CD14-positive monocyte (primary cell): ENCODE measurements at regions of chr17 and their contacts with region 1.

Region 1: DNA sequence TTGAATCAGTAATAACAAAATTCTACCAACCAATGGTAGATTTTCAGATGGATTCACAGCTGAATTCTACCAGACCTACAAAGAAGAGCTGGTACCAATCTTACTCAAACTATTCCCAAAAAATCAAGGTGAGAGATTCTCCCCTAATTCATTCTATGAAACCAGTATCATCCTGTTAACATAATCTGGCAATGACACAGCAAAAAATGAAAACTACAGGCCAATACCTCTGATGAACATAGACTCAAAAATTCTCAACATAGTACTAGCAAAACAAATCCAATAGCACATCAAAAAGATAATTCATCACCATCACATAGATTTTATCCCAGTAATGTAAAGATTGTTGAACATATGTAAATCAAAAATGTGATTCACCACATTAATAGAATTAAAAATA is 234.4 kb upstream of the KIF2B start:
- DNase-seq: no peak
- H3K4me3 ChIP-seq: no peak overlapping the region
- H3K4me3 Mint-ChIP-seq: no peak overlapping the region
- H3K27ac ChIP-seq: no peak overlapping the region
- H3K27ac Mint-ChIP-seq: no peak overlapping the region
- H3K4me1 ChIP-seq: no peaks in the 10 kb centered on the region
- H3K4me1 Mint-ChIP-seq: no peaks in the 10 kb centered on the region
- H3K27me3 ChIP-seq: no peaks in the 10 kb centered on the region
- H3K27me3 Mint-ChIP-seq: no peaks in the 10 kb centered on the region
- CTCF ChIP-seq: no peak

Region 2: DNA sequence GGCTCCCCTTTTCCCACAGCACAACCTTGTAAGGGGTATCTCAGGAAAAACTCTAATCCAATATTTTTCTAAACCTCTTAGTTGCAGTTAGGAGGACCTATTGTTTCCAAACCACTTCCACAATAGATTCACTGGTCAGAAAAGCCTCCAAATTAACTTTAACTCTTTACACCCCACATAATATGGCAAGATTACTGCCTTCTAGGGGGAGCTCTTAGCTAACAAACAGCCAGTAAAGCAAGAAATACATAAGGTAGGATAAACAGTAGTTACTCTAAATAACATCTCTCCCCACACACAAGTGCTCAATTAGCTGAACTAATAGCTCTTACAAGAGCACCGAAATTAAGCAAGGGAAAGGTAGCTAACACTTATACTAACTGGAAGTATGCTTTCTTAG is 42.3 kb after region 1 on chr17:
- intact Hi-C with region 1: loop called in 1 of 2 experiments (anchors 10 kb)
- DNase-seq: no peak
- H3K4me3 ChIP-seq: no peak overlapping the region
- H3K4me3 Mint-ChIP-seq: no peak overlapping the region
- H3K27ac ChIP-seq: no peak overlapping the region
- H3K27ac Mint-ChIP-seq: no peak overlapping the region
- H3K4me1 ChIP-seq: no peaks in the 10 kb centered on the region
- H3K4me1 Mint-ChIP-seq: no peaks in the 10 kb centered on the region
- H3K27me3 ChIP-seq: no peaks in the 10 kb centered on the region
- H3K27me3 Mint-ChIP-seq: no peaks in the 10 kb centered on the region
- CTCF ChIP-seq: no peak

Region 3: GRCh38 chr17:53687324-53687723 is 99.0 kb after region 1 on chr17:
- intact Hi-C with region 1: no loop called
- DNase-seq: no peak
- H3K4me3 ChIP-seq: no peak overlapping the region
- H3K4me3 Mint-ChIP-seq: no peak overlapping the region
- H3K27ac ChIP-seq: no peak overlapping the region
- H3K27ac Mint-ChIP-seq: no peak overlapping the region
- H3K4me1 ChIP-seq: no peaks in the 10 kb centered on the region
- H3K4me1 Mint-ChIP-seq: no peaks in the 10 kb centered on the region
- H3K27me3 ChIP-seq: no peaks in the 10 kb centered on the region
- H3K27me3 Mint-ChIP-seq: no peaks in the 10 kb centered on the region
- CTCF ChIP-seq: no peak